ENCODE measurements at regions of chr17 and their contacts with region 1.

Region 1: GRCh38 chr17:1999557-2000251 is 25.4 kb downstream of the RTN4RL1 start:
- DNase-seq: peak; percentile 62 to 72
- ATAC-seq: peak; percentile 68 to 92 (median 87)
- H3K4me3 ChIP-seq: peak overlapping the region in 1 of 10 donors; percentile 15
- H3K27ac ChIP-seq: peak overlapping the region; percentile 70 to 95 (median 86)
- H3K4me1 ChIP-seq: peaks cover 15 to 55% (median 37%) of the 10 kb centered on the region in 9 donors
- H3K27me3 ChIP-seq: peaks cover 0 to 28% (median 0%) of the 10 kb centered on the region in 7 donors
- CTCF ChIP-seq: no peak

Region 2: DNA sequence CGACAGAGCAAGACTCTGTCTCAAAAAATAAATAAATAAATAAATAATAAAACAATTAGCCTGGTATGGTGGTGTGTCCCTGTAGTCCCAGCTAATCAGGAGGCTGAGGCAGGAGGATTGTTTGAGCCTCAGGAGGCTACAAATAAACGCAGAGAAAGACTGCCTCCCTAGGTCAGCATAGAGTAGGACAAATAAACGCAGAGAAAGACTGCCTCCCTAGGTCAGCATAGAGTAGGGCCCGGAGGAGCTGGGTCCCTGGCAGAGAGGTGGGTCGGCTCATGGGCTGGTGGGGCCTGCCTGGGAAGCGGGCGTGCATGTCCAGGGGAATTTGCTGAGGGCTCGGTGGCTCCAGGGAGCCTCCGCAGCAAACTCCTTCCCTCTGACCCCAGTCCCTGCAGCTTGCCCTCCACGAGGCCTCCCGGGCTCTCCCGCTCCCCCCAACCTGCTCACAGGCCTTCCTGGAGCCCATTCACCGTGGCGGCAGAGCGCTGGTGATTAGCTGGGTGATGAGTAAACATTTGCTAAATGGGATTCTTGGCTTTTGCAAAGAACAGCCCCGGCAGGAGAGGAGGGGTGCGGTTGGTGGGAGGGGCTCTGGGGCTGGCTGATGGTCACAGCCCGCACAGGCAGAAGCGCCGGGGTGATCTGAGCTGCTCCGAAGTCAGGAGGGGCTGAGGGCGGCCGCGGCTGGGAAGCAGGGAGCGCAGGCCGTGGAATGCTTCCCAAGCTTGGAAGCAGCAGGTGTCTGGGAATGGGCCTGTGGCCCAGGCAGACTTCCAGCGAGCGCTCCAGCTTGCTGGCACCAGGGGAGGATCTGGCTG is 67.7 kb before region 1 on chr17:
- intact Hi-C with region 1: loop called in 1 of 10 experiments (anchors 10 kb)
- DNase-seq: peak; percentile 25 to 58
- ATAC-seq: peak; percentile 30 to 60 (median 47)
- H3K4me3 ChIP-seq: peak overlapping the region in 1 of 10 donors; percentile 14
- H3K27ac ChIP-seq: peak overlapping the region in 9 of 10 donors; percentile 11 to 54 (median 39)
- H3K4me1 ChIP-seq: peaks cover 0 to 25% (median 13%) of the 10 kb centered on the region in 9 donors
- H3K27me3 ChIP-seq: peaks cover 0 to 3% (median 0%) of the 10 kb centered on the region in 7 donors
- CTCF ChIP-seq: no peak

Region 3: GRCh38 chr17:1939981-1940809 is 59.5 kb before region 1 on chr17:
- intact Hi-C with region 1: loop called in 2 of 10 experiments (anchors 2 to 10 kb)
- DNase-seq: no peak
- ATAC-seq: peak in 3 of 8 donors; percentile 17 to 40 (median 26)
- H3K4me3 ChIP-seq: no peak overlapping the region
- H3K27ac ChIP-seq: no peak overlapping the region
- H3K4me1 ChIP-seq: peaks cover 0 to 8% (median 0%) of the 10 kb centered on the region in 9 donors
- H3K27me3 ChIP-seq: no peaks in the 10 kb centered on the region
- CTCF ChIP-seq: no peak

Region 4: GRCh38 chr17:1953831-1954230 is 45.9 kb before region 1 on chr17:
- intact Hi-C with region 1: no loop called
- DNase-seq: no peak
- ATAC-seq: no peak
- H3K4me3 ChIP-seq: no peak overlapping the region
- H3K27ac ChIP-seq: no peak overlapping the region
- H3K4me1 ChIP-seq: peaks cover 0 to 7% (median 0%) of the 10 kb centered on the region in 9 donors
- H3K27me3 ChIP-seq: no peaks in the 10 kb centered on the region
- CTCF ChIP-seq: no peak